HepG2 (cell line): ENCODE measurements at regions of chrX and their contacts with region 1.

Region 1: GRCh38 chrX:123788744-123789143 is 55.9 kb upstream of the THOC2 start:
- DNase-seq: no peak
- ATAC-seq: no peak
- H3K4me3 ChIP-seq: no peak overlapping the region
- H3K27ac ChIP-seq: no peak overlapping the region
- H3K4me1 ChIP-seq: peaks cover 23% of the 10 kb centered on the region
- H3K27me3 ChIP-seq: no peaks in the 10 kb centered on the region
- CTCF ChIP-seq: no peak
- EP300 ChIP-seq: no peak
- POLR2A ChIP-seq: no peak
- RAD21 ChIP-seq: no peak

Region 2: GRCh38 chrX:123871309-123871708 is 82.6 kb after region 1 on chrX:
- CTCF ChIA-PET with region 1: no interaction called
- POLR2A ChIA-PET with region 1: no interaction called
- in situ Hi-C with region 1: no loop called
- intact Hi-C with region 1: loop called (anchors 5 kb)
- DNase-seq: no peak
- ATAC-seq: no peak
- H3K4me3 ChIP-seq: no peak overlapping the region
- H3K27ac ChIP-seq: no peak overlapping the region
- H3K4me1 ChIP-seq: 0 out of 2 replicates have a peak, but pooled peaks cover 8% of the 10 kb centered on the region
- H3K27me3 ChIP-seq: no peaks in the 10 kb centered on the region
- CTCF ChIP-seq: no peak
- EP300 ChIP-seq: no peak
- POLR2A ChIP-seq: no peak
- RAD21 ChIP-seq: no peak

Region 3: GRCh38 chrX:124005228-124005627 is 216.5 kb after region 1 on chrX:
- CTCF ChIA-PET with region 1: no interaction called
- POLR2A ChIA-PET with region 1: no interaction called
- in situ Hi-C with region 1: no loop called
- intact Hi-C with region 1: no loop called
- DNase-seq: no peak
- ATAC-seq: no peak
- H3K4me3 ChIP-seq: no peak overlapping the region
- H3K27ac ChIP-seq: no peak overlapping the region
- H3K4me1 ChIP-seq: no peaks in the 10 kb centered on the region
- H3K27me3 ChIP-seq: no peaks in the 10 kb centered on the region
- CTCF ChIP-seq: no peak
- EP300 ChIP-seq: no peak
- POLR2A ChIP-seq: no peak
- RAD21 ChIP-seq: no peak